HEK293T (cell line): ENCODE measurements at regions of chr17 and their contacts with region 1.

Region 1: GRCh38 chr17:76384222-76384986 is at the start of gene SPHK1:
- DNase-seq: peak; percentile 86

Region 2: DNA sequence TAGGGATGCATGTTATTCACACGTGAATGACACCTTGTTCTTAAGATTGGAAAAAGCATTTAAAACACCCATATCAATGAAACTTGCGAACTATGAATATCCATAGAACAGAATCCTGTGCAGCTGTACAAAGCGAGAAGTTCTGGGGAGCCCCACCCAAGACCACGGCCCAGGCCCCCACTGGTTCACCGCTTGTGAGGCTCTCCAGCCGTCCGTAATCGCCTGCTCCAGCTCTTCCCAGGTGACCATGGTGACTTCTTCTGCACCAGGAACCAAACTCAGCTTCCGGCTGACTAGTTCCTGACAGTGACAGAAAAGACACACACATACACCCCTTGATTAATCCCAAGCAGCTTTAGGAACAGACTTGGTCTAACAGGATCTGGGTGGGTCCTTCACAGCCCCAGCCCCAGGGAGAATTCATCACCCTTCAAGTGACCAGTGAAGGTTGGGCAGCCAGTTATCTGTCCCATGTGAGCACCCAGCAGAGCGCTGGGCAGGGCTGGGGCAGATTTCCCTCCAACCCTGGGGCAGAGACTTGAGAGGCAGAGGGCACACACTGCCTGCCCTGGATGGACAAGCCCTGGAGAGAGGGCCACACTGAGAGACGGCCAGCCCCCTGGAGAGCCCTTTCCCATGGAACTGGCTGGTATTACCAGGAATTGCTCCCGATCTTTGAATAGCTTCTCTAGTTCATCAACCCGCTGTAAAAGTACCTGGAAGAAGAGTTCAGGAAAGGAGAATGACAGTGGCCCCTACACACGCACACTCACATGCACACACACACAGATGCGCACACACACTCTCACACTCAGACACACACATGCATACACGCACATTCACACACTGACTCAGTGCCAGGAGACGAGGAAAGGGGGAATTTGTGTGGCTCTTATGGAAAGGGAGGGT is 79.9 kb before region 1 on chr17:
- CTCF ChIA-PET with region 1: interaction called, 13 read pairs
- POLR2A ChIA-PET with region 1: no interaction called
- DNase-seq: no peak

Region 3: GRCh38 chr17:76353599-76354316 is 30.6 kb before region 1 on chr17 and contains the start of gene PRPSAP1:
- CTCF ChIA-PET with region 1: interaction called, 10 read pairs
- POLR2A ChIA-PET with region 1: interaction called, 58 read pairs
- DNase-seq: peak; percentile 92

Region 4: GRCh38 chr17:76370261-76370993 is 14.0 kb before region 1 on chr17:
- CTCF ChIA-PET with region 1: interaction called, 15 read pairs
- POLR2A ChIA-PET with region 1: interaction called, 6 read pairs
- DNase-seq: no peak

Region 5: GRCh38 chr17:76492989-76493501 is 108.6 kb after region 1 on chr17:
- CTCF ChIA-PET with region 1: no interaction called
- POLR2A ChIA-PET with region 1: no interaction called
- DNase-seq: no peak